Heart left ventricle (tissue), 16 donors: ENCODE measurements at regions of chr13 and their contacts with region 1.

Region 1: GRCh38 chr13:59391696-59392095 is 772.0 kb downstream of the DIAPH3 start:
- DNase-seq: peak in 4 of 5 donors; percentile 37 to 78 (median 56)
- ATAC-seq: peak; percentile 55 to 85 (median 82)
- H3K4me3 ChIP-seq: no peak overlapping the region
- H3K27ac ChIP-seq: peak overlapping the region in 6 of 12 donors; percentile 3 to 71 (median 20)
- H3K4me1 ChIP-seq: peaks cover 0 to 12% (median 2%) of the 10 kb centered on the region in 12 donors
- H3K27me3 ChIP-seq: no peaks in the 10 kb centered on the region
- CTCF ChIP-seq: peak; percentile 83 to 95 (median 87)
- POLR2A ChIP-seq: no peak

Region 2: DNA sequence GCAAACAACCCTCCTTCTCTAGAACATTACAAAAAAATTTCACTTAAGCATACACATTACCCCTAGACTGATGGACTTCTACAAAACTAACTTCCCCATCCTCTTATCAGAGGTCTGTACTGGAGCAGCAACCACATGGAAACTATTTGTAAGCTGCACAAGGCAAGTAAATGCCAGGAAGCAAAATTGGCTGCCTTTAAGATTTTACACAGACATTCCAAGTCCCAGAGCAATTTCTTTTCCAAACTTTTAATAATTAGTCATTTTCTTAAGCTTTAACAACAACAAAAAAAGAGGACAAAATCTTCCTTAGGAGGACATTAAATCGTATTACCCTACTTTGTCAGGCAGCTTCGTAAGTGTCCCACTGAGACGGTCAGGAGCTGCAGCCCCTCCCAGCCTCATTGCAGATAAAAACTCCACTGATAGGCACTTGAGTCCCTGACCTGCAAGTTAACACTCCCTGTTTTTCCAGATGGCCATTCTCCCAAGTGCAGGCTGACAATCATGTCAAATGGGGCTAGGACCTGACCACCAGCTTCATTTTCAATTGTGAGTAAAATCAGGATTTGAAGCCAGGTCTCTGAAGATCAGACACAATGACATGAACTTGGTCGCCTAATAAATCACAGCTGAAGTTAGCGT is 91.9 kb after region 1 on chr13:
- intact Hi-C with region 1: loop called in 3 of 10 experiments (anchors 10 kb)
- DNase-seq: peak in 3 of 5 donors; percentile 24 to 48 (median 34)
- ATAC-seq: peak; percentile 68 to 86 (median 79)
- H3K4me3 ChIP-seq: no peak overlapping the region
- H3K27ac ChIP-seq: peak overlapping the region in 9 of 12 donors; percentile 32 to 67 (median 47)
- H3K4me1 ChIP-seq: peaks cover 0 to 47% (median 15%) of the 10 kb centered on the region in 12 donors
- H3K27me3 ChIP-seq: no peaks in the 10 kb centered on the region
- CTCF ChIP-seq: no peak
- POLR2A ChIP-seq: no peak

Region 3: GRCh38 chr13:59766233-59766632 is 374.5 kb after region 1 on chr13:
- intact Hi-C with region 1: loop called in 6 of 10 experiments (anchors 2 to 10 kb)
- DNase-seq: no peak
- ATAC-seq: no peak
- H3K4me3 ChIP-seq: no peak overlapping the region
- H3K27ac ChIP-seq: no peak overlapping the region
- H3K4me1 ChIP-seq: no peaks in the 10 kb centered on the region
- H3K27me3 ChIP-seq: no peaks in the 10 kb centered on the region
- CTCF ChIP-seq: no peak
- POLR2A ChIP-seq: no peak

Region 4: DNA sequence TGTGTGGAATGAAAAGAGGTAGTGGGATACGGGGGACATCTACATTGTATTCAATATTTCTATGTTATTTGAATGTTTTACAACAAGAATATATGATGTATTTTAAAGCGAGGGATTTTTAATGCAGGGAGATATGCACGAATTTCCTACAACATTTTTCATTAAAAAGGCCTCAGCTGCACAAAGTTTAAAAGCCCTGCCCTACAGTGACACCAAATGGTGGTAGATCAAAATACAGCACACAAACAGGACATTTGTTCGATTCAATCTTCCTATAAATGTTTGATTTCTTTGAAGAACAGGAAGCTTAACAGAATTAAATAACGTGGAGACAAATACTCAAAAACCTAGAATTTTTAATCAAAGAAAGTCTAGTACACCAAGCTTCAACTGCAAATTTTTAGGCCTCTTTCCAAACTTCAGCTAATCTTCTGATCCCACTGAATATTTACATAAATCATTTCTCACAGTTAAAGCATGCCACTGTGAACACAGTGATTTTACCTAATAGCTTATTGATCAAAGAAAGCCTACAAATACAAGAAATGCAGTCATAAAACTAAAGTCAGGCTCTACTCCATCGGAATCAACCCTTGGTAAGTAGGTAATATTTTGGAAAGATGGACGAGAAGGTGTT is 514.8 kb after region 1 on chr13:
- intact Hi-C with region 1: loop called in 1 of 10 experiments (anchors 10 kb)
- DNase-seq: no peak
- ATAC-seq: no peak
- H3K4me3 ChIP-seq: no peak overlapping the region
- H3K27ac ChIP-seq: no peak overlapping the region
- H3K4me1 ChIP-seq: no peaks in the 10 kb centered on the region
- H3K27me3 ChIP-seq: no peaks in the 10 kb centered on the region
- CTCF ChIP-seq: peak in 11 of 12 donors; percentile 25 to 64 (median 51)
- POLR2A ChIP-seq: no peak